Posterior vena cava (tissue), 2 donors: ENCODE measurements at regions of chr17 and their contacts with region 1.

Region 1: GRCh38 chr17:979538-980405 is at the start of gene NXN:
- DNase-seq: peak; percentile 96
- total RNA-seq, gene NXN: 34.8 to 46.3 TPM

Region 2: DNA sequence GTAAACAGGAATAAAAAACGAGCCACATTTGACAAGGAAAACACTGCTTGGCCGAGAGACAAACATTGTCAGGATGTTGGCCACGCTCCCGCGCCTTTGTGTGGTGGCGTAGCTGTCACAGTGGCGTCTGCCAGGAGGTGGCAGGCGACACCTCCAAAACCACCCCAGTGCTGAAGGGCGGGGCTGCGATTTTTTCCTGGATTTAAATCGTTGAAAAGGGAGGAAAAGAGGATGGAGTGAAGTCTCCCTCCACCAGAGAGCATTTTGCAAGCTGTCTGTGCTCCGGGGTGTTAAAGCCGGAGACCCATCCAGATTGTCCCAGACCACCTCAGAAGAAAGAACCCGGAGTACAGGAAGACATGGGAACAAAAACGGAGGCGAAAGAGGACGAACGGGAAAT is 184.9 kb before region 1 on chr17:
- intact Hi-C with region 1: loop called (anchors 2 to 5 kb)
- DNase-seq: peak; percentile 93

Region 3: GRCh38 chr17:869567-870525 is 109.9 kb before region 1 on chr17:
- intact Hi-C with region 1: loop called in 1 of 2 experiments (anchors 5 kb)
- DNase-seq: peak; percentile 89